ENCODE measurements at regions of chr7 and their contacts with region 1.

Region 1: GRCh38 chr7:149422129-149422913 is 38.5 kb downstream of the ZNF777 start:
- DNase-seq: peak; percentile 9
- ATAC-seq: peak; percentile 98
- H3K4me3 ChIP-seq: peak overlapping the region; percentile 57
- H3K27ac ChIP-seq: no peak overlapping the region
- H3K4me1 ChIP-seq: no peaks in the 10 kb centered on the region
- H3K27me3 ChIP-seq: no peaks in the 10 kb centered on the region
- CTCF ChIP-seq: peak; percentile 26 to 92 (median 67); a peak in 5 of 6 replicates
- EP300 ChIP-seq: no peak
- POLR2A ChIP-seq: peak; percentile 74
- RAD21 ChIP-seq: peak; percentile 59

Region 2: GRCh38 chr7:149239345-149240191 is 182.8 kb before region 1 on chr7 and contains the start of gene ZNF212:
- CTCF ChIA-PET with region 1: no interaction called
- POLR2A ChIA-PET with region 1: no interaction called
- RAD21 ChIA-PET with region 1: no interaction called
- SMC1A ChIA-PET with region 1: no interaction called
- in situ Hi-C with region 1: no loop called
- intact Hi-C with region 1: loop called (anchors 1 kb)
- DNase-seq: peak; percentile 56
- ATAC-seq: peak; percentile 99
- H3K4me3 ChIP-seq: peak within 1 kb of the TSS; percentile 99
- H3K27ac ChIP-seq: peak within 1 kb of the TSS; percentile 73
- H3K4me1 ChIP-seq: peaks cover 10% of the 10 kb centered on the region
- H3K27me3 ChIP-seq: no peaks in the 10 kb centered on the region
- CTCF ChIP-seq: peak; percentile 87 to 96 (median 92); a peak in 5 of 6 replicates
- EP300 ChIP-seq: no peak
- POLR2A ChIP-seq: peak; percentile 84
- RAD21 ChIP-seq: peak; percentile 51
- polyA plus RNA-seq, gene ZNF212: 1.2 to 2.1 TPM

Region 3: GRCh38 chr7:149460493-149461277 is 38.4 kb after region 1 on chr7 and contains the start of gene ZNF777:
- CTCF ChIA-PET with region 1: interaction called, 8 read pairs
- POLR2A ChIA-PET with region 1: no interaction called
- RAD21 ChIA-PET with region 1: interaction called, 3 read pairs
- SMC1A ChIA-PET with region 1: no interaction called
- in situ Hi-C with region 1: no loop called
- intact Hi-C with region 1: loop called (anchors 5 kb)
- DNase-seq: peak; percentile 34
- ATAC-seq: peak; percentile 99
- H3K4me3 ChIP-seq: peak within 1 kb of the TSS; percentile 73
- H3K27ac ChIP-seq: peak within 1 kb of the TSS; percentile 54
- H3K4me1 ChIP-seq: 0 out of 2 replicates have a peak, but pooled peaks cover 6% of the 10 kb centered on the region
- H3K27me3 ChIP-seq: no peaks in the 10 kb centered on the region
- CTCF ChIP-seq: peak; percentile 47 to 66 (median 61); a peak in 5 of 6 replicates
- EP300 ChIP-seq: no peak
- POLR2A ChIP-seq: peak; percentile 83
- RAD21 ChIP-seq: no peak
- polyA plus RNA-seq, gene ZNF777: 0.03 to 0.13 TPM

Region 4: GRCh38 chr7:149598721-149599306 is 176.5 kb after region 1 on chr7:
- CTCF ChIA-PET with region 1: interaction called, 7 read pairs
- POLR2A ChIA-PET with region 1: interaction called, 3 read pairs
- RAD21 ChIA-PET with region 1: interaction called, 9 read pairs
- SMC1A ChIA-PET with region 1: no interaction called
- in situ Hi-C with region 1: no loop called
- intact Hi-C with region 1: loop called (anchors 5 kb)
- DNase-seq: no peak
- ATAC-seq: peak; percentile 62
- H3K4me3 ChIP-seq: peak overlapping the region; percentile 60; the same call in 1 of the 2 replicates
- H3K27ac ChIP-seq: peak overlapping the region; percentile 93
- H3K4me1 ChIP-seq: peaks cover 21% of the 10 kb centered on the region
- H3K27me3 ChIP-seq: no peaks in the 10 kb centered on the region
- CTCF ChIP-seq: peak; percentile 49 to 64 (median 56)
- EP300 ChIP-seq: no peak
- POLR2A ChIP-seq: no peak
- RAD21 ChIP-seq: peak; percentile 85